B cell (primary cell): ENCODE measurements at regions of chr1 and their contacts with region 1.

Region 1: GRCh38 chr1:221069178-221069903 is 190.1 kb downstream of the HLX start:
- DNase-seq: peak; percentile 85
- ATAC-seq: peak; percentile 85
- H3K4me3 ChIP-seq: peak overlapping the region in 4 of 5 experiments; percentile 13 to 46 (median 28)
- H3K4me3 Mint-ChIP-seq: peak overlapping the region; percentile 76
- H3K27ac ChIP-seq: peak overlapping the region; percentile 80 to 87
- H3K27ac Mint-ChIP-seq: peak overlapping the region; percentile 99
- H3K4me1 ChIP-seq: peaks cover 68 to 75% of the 10 kb centered on the region in 2 donors
- H3K4me1 Mint-ChIP-seq: peaks cover 78% of the 10 kb centered on the region
- H3K27me3 ChIP-seq: no peaks in the 10 kb centered on the region
- H3K27me3 Mint-ChIP-seq: no peaks in the 10 kb centered on the region
- CTCF ChIP-seq: no peak

Region 2: DNA sequence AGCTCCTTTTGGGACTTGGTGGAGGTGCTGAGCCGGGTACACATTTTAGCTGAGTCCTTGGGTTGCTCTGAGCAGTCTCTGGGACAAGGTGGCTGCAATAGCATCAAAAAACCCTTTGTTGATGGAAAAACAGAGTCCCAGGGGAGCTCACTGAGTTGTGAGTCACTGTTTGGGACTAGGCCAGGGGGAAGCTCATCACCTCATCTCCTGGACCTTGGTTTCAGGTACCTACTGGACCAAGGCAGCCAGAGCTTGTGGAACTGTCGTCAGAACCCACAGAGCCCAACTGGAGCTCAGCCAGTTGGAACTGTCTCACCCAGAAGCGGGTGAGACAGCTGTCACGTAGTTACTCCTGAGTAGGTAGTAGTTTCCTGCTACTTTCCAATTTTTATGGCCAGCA is 43.4 kb before region 1 on chr1:
- CTCF ChIA-PET with region 1: interaction called, 4 read pairs
- POLR2A ChIA-PET with region 1: interaction called, 3 read pairs
- intact Hi-C with region 1: loop called (anchors 1 kb)
- DNase-seq: peak; percentile 61
- ATAC-seq: peak; percentile 95
- H3K4me3 ChIP-seq: no peak overlapping the region
- H3K4me3 Mint-ChIP-seq: peak overlapping the region; percentile 1
- H3K27ac ChIP-seq: no peak overlapping the region
- H3K27ac Mint-ChIP-seq: peak overlapping the region; percentile 56
- H3K4me1 ChIP-seq: peaks cover 12 to 13% of the 10 kb centered on the region in 2 donors
- H3K4me1 Mint-ChIP-seq: peaks cover 25% of the 10 kb centered on the region
- H3K27me3 ChIP-seq: no peaks in the 10 kb centered on the region
- H3K27me3 Mint-ChIP-seq: no peaks in the 10 kb centered on the region
- CTCF ChIP-seq: no peak

Region 3: DNA sequence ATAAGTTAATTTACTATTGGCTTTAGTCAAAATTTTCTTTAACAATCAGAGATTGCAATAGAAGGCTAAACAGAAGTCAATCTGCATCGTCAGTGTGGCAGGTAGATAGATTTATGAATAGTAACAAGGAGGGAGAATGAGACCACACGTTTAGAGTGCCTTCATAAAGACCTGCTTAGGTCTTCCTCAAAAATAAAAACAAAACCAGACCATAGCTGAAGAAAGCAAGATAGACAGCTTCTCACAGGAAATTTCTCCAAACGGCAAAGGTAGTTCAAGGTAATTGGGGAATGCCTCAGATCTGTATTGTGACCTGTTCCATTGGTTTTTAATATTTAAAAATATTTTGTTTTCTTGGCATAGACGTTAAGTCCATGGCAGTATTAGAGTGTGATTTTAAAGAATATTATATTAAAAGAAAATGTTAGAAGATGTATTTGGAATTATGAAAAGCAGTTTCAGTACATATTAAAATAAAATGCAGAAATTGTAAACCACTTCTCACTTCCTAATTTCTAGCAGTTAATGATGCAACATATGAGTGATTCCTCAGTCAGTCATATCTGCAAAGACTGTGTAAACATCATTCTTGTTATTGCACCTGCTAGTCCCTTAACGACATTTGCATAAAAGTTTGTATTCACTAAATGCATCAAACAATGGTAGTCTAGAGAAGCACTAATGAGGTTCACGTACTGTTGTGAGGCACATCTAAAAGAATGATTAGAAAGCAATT is 87.9 kb after region 1 on chr1:
- CTCF ChIA-PET with region 1: no interaction called
- POLR2A ChIA-PET with region 1: no interaction called
- intact Hi-C with region 1: loop called (anchors 1 kb)
- DNase-seq: peak; percentile 76
- ATAC-seq: peak; percentile 89
- H3K4me3 ChIP-seq: peak overlapping the region in 1 of 5 experiments; percentile 12
- H3K4me3 Mint-ChIP-seq: peak overlapping the region; percentile 52
- H3K27ac ChIP-seq: peak overlapping the region; percentile 37 to 42
- H3K27ac Mint-ChIP-seq: peak overlapping the region; percentile 74
- H3K4me1 ChIP-seq: peaks cover 24 to 30% of the 10 kb centered on the region in 2 donors
- H3K4me1 Mint-ChIP-seq: peaks cover 33% of the 10 kb centered on the region
- H3K27me3 ChIP-seq: peaks cover 0 to 8% (median 2%) of the 10 kb centered on the region in 4 experiments
- H3K27me3 Mint-ChIP-seq: no peaks in the 10 kb centered on the region
- CTCF ChIP-seq: no peak